ENCODE measurements at regions of chr7 and their contacts with region 1.

Region 1: DNA sequence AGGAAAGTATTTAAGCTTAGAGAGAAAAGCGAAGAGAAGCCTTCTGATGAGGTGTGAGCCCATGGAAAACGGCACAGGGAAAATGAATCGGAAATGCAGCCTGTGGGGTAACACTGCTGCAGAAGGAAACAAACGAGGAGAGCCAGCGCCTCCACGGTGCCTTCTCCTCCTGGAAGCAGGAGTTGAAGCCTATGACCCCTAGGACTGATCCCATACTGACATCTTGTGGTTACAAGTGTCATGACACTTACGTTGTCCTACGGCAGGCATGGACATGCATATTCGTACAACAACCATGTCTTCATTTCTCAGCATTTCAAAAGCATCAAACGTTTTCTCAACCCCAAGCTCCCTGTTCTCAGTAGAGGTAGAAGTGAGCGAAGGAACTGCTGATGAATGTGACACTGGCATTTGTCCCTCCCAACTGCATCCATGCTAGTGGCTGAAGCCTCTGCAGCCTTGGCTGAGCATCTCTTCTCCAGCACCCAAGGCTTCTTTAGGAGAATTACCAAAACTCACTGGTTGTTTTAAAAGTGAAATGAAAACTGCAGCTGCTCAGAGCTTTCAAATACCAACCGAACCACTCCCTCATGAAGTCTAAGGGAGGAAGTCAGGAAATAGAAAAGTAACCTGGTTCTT is 160.2 kb downstream of the JAZF1 start:
- DNase-seq: peak; percentile 77
- ATAC-seq: peak; percentile 93
- H3K4me3 ChIP-seq: no peak overlapping the region
- H3K27ac ChIP-seq: no peak overlapping the region
- H3K4me1 ChIP-seq: peaks cover 12% of the 10 kb centered on the region
- H3K27me3 ChIP-seq: no peaks in the 10 kb centered on the region
- CTCF ChIP-seq: peak; percentile 87
- POLR2A ChIP-seq: no peak
- RAD21 ChIP-seq: peak; percentile 96

Region 2: DNA sequence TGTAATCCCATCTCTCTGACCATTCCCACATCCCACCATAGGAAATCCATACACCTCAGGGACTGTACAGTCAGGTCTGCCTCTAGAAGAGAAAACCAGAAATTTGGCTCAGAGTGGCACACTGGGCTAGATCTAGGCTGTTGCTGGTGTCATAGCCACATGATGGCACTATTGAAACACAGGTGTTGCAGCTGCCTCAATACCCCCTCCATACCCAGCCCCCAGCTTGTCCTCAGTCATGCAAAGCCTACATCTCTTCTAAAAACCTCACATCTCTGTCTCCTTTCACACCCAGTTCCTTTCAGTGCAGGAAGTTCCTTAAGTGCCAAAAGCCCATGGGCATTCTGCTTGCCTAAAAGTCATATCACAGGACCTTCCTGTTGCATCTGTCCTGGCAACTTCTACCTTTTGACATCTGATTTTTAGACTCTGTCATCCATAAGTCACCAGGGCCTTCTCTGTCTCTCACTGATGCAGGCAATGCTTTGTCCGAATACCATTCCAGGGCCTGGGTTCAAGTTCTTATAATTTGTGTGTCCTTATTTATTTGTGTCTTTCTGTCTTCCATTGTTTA is 330.7 kb before region 1 on chr7:
- CTCF ChIA-PET with region 1: no interaction called
- POLR2A ChIA-PET with region 1: no interaction called
- dilution Hi-C with region 1: no loop called
- in situ Hi-C with region 1: no loop called
- intact Hi-C with region 1: loop called (anchors 1 kb)
- DNase-seq: peak; percentile 31
- ATAC-seq: peak; percentile 73
- H3K4me3 ChIP-seq: no peak overlapping the region
- H3K27ac ChIP-seq: no peak overlapping the region
- H3K4me1 ChIP-seq: 0 out of 2 replicates have a peak, but pooled peaks cover 2% of the 10 kb centered on the region
- H3K27me3 ChIP-seq: no peaks in the 10 kb centered on the region
- CTCF ChIP-seq: peak; percentile 45
- POLR2A ChIP-seq: no peak
- RAD21 ChIP-seq: peak; percentile 64

Region 3: GRCh38 chr7:27784393-27785053 is 235.9 kb before region 1 on chr7:
- CTCF ChIA-PET with region 1: no interaction called
- POLR2A ChIA-PET with region 1: no interaction called
- dilution Hi-C with region 1: no loop called
- in situ Hi-C with region 1: loop called (anchors 25 kb)
- intact Hi-C with region 1: loop called (anchors 1 kb)
- DNase-seq: peak; percentile 70
- ATAC-seq: peak; percentile 66
- H3K4me3 ChIP-seq: no peak overlapping the region
- H3K27ac ChIP-seq: no peak overlapping the region
- H3K4me1 ChIP-seq: no peaks in the 10 kb centered on the region
- H3K27me3 ChIP-seq: no peaks in the 10 kb centered on the region
- CTCF ChIP-seq: peak; percentile 57
- POLR2A ChIP-seq: no peak
- RAD21 ChIP-seq: no peak

Region 4: GRCh38 chr7:28347475-28348318 is 327.3 kb after region 1 on chr7:
- CTCF ChIA-PET with region 1: no interaction called
- POLR2A ChIA-PET with region 1: no interaction called
- dilution Hi-C with region 1: no loop called
- in situ Hi-C with region 1: no loop called
- intact Hi-C with region 1: no loop called
- DNase-seq: peak; percentile 86
- ATAC-seq: peak; percentile 73
- H3K4me3 ChIP-seq: no peak overlapping the region
- H3K27ac ChIP-seq: peak overlapping the region; percentile 94; the same call in 1 of the 2 replicates
- H3K4me1 ChIP-seq: peaks cover 13% of the 10 kb centered on the region
- H3K27me3 ChIP-seq: no peaks in the 10 kb centered on the region; the same call in 1 of the 2 replicates
- CTCF ChIP-seq: no peak
- POLR2A ChIP-seq: no peak
- RAD21 ChIP-seq: no peak

Measured in IMR-90 (cell line).